ENCODE measurements at regions of chr7 and their contacts with region 1.

Region 1: GRCh38 chr7:116671681-116672595 is at the start of gene MET:
- DNase-seq: peak; percentile 72
- H3K4me3 Mint-ChIP-seq: peak within 1 kb of the TSS; percentile 73
- H3K27ac Mint-ChIP-seq: no peak within 1 kb of the TSS
- H3K4me1 Mint-ChIP-seq: peaks cover 2% of the 10 kb centered on the region
- H3K27me3 Mint-ChIP-seq: peaks cover 54% of the 10 kb centered on the region
- total RNA-seq, gene MET: 0.42 to 0.52 TPM

Region 2: DNA sequence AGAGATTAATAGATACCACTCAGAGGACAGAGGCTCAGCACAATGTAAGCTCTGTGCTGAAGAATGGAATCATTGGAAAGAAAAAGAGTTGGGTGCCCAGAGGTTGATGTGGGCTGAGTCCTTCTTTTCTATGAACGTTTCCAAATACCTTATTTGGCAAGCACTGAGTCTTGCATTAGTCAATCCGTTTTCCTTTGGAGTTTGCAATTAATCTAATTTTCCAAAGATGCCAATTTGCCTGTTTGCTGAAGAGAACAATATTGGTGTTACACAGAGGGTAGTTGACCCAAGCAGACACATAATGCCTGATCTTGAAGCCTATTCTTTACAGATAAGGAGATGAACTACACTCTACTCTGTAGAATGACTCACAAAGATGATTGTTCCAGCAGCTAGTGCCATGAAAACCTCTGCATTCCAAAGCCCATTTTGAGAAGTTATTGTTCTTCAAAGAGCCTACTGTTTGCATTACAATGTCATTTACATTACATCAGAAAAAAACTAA is 55.3 kb before region 1 on chr7:
- CTCF ChIA-PET with region 1: no interaction called
- intact Hi-C with region 1: no loop called
- DNase-seq: no peak
- H3K4me3 Mint-ChIP-seq: no peak overlapping the region
- H3K27ac Mint-ChIP-seq: no peak overlapping the region
- H3K4me1 Mint-ChIP-seq: no peaks in the 10 kb centered on the region
- H3K27me3 Mint-ChIP-seq: peaks cover 10% of the 10 kb centered on the region

Region 3: DNA sequence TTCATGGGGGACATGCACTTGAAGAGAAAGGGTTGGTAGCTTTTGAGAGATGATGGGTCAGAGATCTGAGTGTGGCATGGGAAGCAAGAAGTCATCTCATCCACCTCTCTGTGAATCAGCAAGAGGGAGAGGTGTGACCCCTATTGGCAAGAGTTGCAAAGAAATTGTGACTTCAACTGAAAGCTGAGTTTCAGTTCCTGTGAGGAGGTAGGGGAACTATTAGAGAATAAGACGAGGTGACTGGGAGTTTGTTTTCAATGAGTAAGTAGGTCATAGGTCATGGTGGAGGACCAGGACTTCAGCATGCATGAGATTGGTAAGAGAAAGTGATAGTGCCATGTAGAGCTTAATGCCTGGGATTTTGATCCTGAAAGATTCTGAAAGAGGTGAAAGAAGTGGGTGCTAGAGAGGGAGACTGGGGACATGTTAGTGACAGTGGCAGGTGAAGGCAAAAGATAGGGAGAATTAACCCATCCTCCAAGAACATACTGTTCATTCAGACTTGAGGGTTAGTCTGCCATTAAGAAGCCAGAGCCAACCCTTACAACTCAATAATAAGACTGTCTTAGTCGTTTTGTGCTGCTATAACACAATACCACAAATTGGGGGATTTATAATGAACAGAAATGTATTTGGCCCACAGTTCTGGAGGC is 115.0 kb after region 1 on chr7:
- CTCF ChIA-PET with region 1: interaction called, 3 read pairs
- intact Hi-C with region 1: loop called (anchors 1 kb)
- DNase-seq: peak; percentile 63
- H3K4me3 Mint-ChIP-seq: no peak overlapping the region
- H3K27ac Mint-ChIP-seq: no peak overlapping the region
- H3K4me1 Mint-ChIP-seq: no peaks in the 10 kb centered on the region
- H3K27me3 Mint-ChIP-seq: peaks cover 3% of the 10 kb centered on the region

Region 4: GRCh38 chr7:116802746-116803152 is 130.8 kb after region 1 on chr7:
- CTCF ChIA-PET with region 1: no interaction called
- intact Hi-C with region 1: loop called (anchors 1 kb)
- DNase-seq: peak; percentile 49
- H3K4me3 Mint-ChIP-seq: no peak overlapping the region
- H3K27ac Mint-ChIP-seq: no peak overlapping the region
- H3K4me1 Mint-ChIP-seq: peaks cover 5% of the 10 kb centered on the region
- H3K27me3 Mint-ChIP-seq: peaks cover 14% of the 10 kb centered on the region

Region 5: GRCh38 chr7:116809636-116810266 is 137.8 kb after region 1 on chr7:
- CTCF ChIA-PET with region 1: no interaction called
- intact Hi-C with region 1: loop called (anchors 1 kb)
- DNase-seq: peak; percentile 21
- H3K4me3 Mint-ChIP-seq: no peak overlapping the region
- H3K27ac Mint-ChIP-seq: no peak overlapping the region
- H3K4me1 Mint-ChIP-seq: no peaks in the 10 kb centered on the region
- H3K27me3 Mint-ChIP-seq: no peaks in the 10 kb centered on the region

Region 6: DNA sequence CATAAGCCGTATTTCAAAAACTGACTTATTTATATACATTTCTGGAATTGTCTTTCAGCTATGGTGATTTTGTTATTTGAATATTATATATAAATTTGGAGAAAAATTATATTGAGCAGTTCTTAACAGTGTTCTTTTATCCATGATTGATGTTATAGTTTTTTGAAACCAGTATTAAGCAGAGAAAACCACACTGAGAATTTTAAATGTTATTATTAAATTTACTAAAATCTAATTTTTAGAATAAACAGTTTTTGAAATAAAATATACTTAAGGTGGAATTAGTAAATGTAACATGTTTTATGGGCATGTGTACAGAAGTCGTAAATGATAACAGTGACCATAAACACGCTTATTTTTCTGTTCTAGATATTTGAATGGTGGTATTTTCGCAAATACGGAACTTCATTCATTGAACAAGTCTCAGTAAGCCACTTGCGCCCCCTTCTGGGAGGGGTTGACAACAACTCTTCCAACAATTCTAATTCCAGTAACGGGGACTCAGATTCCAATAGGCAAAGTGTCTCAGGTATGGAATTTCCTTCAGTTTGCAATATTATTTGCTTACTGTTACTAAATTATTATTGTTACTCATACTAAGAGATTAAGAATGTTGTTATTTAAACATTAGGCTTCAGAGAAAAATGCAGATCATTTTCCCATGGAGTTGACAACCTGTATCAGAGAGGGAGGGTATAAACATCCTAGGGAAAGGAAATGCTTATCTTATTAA is 447.4 kb after region 1 on chr7:
- CTCF ChIA-PET with region 1: no interaction called
- intact Hi-C with region 1: loop called (anchors 10 kb)
- DNase-seq: peak; percentile 88
- H3K4me3 Mint-ChIP-seq: no peak overlapping the region
- H3K27ac Mint-ChIP-seq: no peak overlapping the region
- H3K4me1 Mint-ChIP-seq: peaks cover 5% of the 10 kb centered on the region
- H3K27me3 Mint-ChIP-seq: peaks cover 1% of the 10 kb centered on the region